ENCODE measurements at regions of chr19 and their contacts with region 1.

Region 1: GRCh38 chr19:54231077-54231931 is 8.5 kb upstream of the LILRB3 start:
- DNase-seq: peak; percentile 79
- H3K4me3 ChIP-seq: no peak overlapping the region
- H3K27ac ChIP-seq: no peak overlapping the region
- H3K4me1 ChIP-seq: no peaks in the 10 kb centered on the region
- H3K27me3 ChIP-seq: no peaks in the 10 kb centered on the region
- CTCF ChIP-seq: peak; percentile 53 to 90 (median 82)
- POLR2A ChIP-seq: no peak

Region 2: DNA sequence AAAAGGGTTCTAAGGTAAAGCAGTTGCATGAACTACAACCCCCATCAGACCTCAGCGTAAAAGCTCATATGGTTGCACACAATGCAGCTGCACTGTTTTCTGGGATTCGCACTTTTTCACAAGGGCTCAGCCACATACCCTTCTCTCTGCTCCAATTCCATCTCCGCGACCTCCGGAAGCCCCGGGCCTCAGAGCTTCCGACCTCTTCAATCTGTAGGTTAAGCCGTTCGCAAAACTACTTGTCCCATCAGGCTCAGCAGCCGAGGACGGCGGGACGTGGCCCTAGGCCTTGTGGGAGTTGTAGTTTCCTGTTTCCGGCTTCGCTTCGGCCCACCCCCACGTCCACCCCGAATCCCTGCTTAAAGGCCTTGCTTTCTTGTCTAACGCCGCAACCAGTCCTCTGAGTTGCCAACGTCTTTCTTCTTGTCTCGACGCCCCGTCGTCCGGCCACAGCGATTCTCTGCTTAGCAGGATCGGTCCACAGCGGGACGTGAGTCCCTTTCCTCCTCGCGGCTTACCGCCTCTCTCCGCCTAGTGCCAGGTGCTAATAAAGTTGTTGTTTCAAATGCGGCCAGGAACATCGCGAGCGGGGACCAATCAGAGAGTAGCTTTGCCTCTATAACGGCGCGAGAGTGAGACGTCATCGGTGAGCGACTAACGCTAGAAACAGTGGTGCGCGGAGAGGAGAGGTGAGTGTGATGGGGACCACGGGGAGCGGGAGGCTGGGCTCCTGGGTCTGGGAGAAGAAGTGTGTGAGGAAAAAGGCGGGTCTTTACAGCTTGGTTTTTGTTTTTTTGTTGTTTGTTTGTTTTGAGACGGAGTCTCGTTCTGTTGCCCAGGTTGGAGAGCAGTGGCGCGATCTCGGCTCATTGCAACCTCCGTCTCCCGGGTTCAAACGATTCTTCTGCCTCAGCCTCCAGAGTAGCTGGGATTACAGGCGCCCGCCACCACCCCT is 115.9 kb before region 1 on chr19 and contains the starts of genes PRPF31 and TFPT:
- intact Hi-C with region 1: no loop called
- DNase-seq: peak; percentile 96
- H3K4me3 ChIP-seq: peak within 1 kb of the TSS; percentile 85 to 90
- H3K27ac ChIP-seq: peak within 1 kb of the TSS; percentile 90 to 92
- H3K4me1 ChIP-seq: peaks cover 16% of the 10 kb centered on the region
- H3K27me3 ChIP-seq: no peaks in the 10 kb centered on the region
- CTCF ChIP-seq: peak in 1 of 4 experiments; percentile 19
- POLR2A ChIP-seq: peak; percentile 51
- total RNA-seq, gene PRPF31: 50.7 to 71.6 TPM
- total RNA-seq, gene TFPT: 30.7 to 52.0 TPM

Region 3: GRCh38 chr19:54168174-54168917 is 63.0 kb before region 1 on chr19:
- intact Hi-C with region 1: loop called (anchors 5 kb)
- DNase-seq: peak; percentile 85
- H3K4me3 ChIP-seq: no peak overlapping the region
- H3K27ac ChIP-seq: no peak overlapping the region
- H3K4me1 ChIP-seq: no peaks in the 10 kb centered on the region
- H3K27me3 ChIP-seq: no peaks in the 10 kb centered on the region
- CTCF ChIP-seq: peak; percentile 81 to 87 (median 86)
- POLR2A ChIP-seq: no peak

Region 4: DNA sequence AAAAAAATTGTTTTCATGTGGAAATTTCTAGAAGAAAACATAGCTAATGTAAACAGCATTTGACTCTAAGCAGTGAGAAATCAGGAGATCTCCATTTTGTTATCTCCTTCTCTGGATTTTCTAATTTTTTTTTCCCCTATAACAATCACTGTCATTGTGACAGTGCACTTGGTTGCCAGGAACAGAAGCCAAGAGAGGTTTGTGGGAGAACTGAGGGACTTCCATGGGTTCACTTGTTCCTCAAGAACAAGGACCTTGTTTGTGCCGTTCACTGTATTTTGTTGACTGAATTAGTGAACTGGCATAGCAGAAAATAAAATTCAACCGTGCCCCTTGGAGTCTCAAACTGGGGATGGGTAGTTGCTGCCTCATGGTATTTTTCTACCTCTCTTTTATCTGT is 1194.7 kb after region 1 on chr19:
- intact Hi-C with region 1: no loop called
- DNase-seq: no peak
- H3K4me3 ChIP-seq: no peak overlapping the region
- H3K27ac ChIP-seq: no peak overlapping the region
- H3K4me1 ChIP-seq: no peaks in the 10 kb centered on the region
- H3K27me3 ChIP-seq: peaks cover 7% of the 10 kb centered on the region
- CTCF ChIP-seq: no peak
- POLR2A ChIP-seq: no peak

Measured in prostate gland (tissue), 2 donors.